ENCODE measurements at regions of chr2 and their contacts with region 1.

Region 1: GRCh38 chr2:217573571-217573970 is 429.2 kb downstream of the TNS1 start:
- DNase-seq: no peak
- ATAC-seq: peak in 4 of 8 donors; percentile 41 to 92 (median 87)
- H3K4me3 ChIP-seq: no peak overlapping the region
- H3K27ac ChIP-seq: no peak overlapping the region
- H3K4me1 ChIP-seq: no peaks in the 10 kb centered on the region
- H3K27me3 ChIP-seq: no peaks in the 10 kb centered on the region
- CTCF ChIP-seq: no peak

Region 2: GRCh38 chr2:215579809-215580208 is 1993.8 kb before region 1 on chr2:
- intact Hi-C with region 1: loop called in 1 of 10 experiments (anchors 10 kb)
- DNase-seq: peak in 1 of 2 donors; percentile 11
- ATAC-seq: peak in 7 of 8 donors; percentile 59 to 94 (median 84)
- H3K4me3 ChIP-seq: no peak overlapping the region
- H3K27ac ChIP-seq: peak overlapping the region in 6 of 10 donors; percentile 2 to 29 (median 12)
- H3K4me1 ChIP-seq: peaks cover 0 to 12% (median 0%) of the 10 kb centered on the region in 9 donors
- H3K27me3 ChIP-seq: no peaks in the 10 kb centered on the region
- CTCF ChIP-seq: no peak

Region 3: DNA sequence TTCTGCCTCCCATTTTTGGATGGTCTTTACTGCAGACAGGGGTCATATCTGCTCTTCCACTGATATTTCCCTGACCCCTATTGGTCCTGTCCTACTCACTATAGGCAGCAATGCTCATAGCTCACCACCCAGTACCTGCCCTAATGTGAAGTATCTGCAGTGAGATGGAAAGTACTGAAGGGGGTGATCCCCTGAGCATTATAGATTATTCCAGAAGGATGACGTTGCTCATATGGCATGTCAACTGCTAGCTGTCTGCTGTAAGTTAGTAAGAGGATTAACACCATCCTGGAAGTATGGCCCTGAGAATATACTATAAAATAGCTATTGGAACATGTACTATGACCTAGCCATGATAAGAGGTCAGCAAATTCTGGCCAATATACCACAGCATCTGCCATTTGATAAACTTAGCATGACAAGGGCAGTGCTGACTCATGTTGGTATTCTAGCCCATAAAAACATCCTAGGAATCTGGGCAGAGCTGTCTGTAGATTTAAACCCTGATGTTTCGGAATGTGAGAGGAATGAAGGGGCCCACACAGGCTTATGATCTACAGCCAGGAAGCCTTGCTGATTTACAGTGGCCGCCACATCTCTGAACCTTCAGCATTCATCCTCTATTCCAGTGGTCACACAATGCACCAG is 22.2 kb before region 1 on chr2:
- intact Hi-C with region 1: no loop called
- DNase-seq: no peak
- ATAC-seq: peak in 1 of 8 donors; percentile 39
- H3K4me3 ChIP-seq: no peak overlapping the region
- H3K27ac ChIP-seq: no peak overlapping the region
- H3K4me1 ChIP-seq: peaks cover 0 to 31% (median 6%) of the 10 kb centered on the region in 9 donors
- H3K27me3 ChIP-seq: no peaks in the 10 kb centered on the region
- CTCF ChIP-seq: no peak